ENCODE measurements at regions of chr1 and their contacts with region 1.

Region 1: GRCh38 chr1:114610546-114611245 is 29.3 kb upstream of the BCAS2 start:
- DNase-seq: no peak
- ATAC-seq: peak in 1 of 4 donors; percentile 19
- H3K4me3 ChIP-seq: no peak overlapping the region
- H3K27ac ChIP-seq: peak overlapping the region; percentile 42
- H3K4me1 ChIP-seq: no peaks in the 10 kb centered on the region
- H3K27me3 ChIP-seq: no peaks in the 10 kb centered on the region
- CTCF ChIP-seq: no peak

Region 2: GRCh38 chr1:114282751-114283403 is 327.8 kb before region 1 on chr1:
- intact Hi-C with region 1: no loop called
- DNase-seq: peak; percentile 88 to 94
- ATAC-seq: peak; percentile 95 to 100 (median 98)
- H3K4me3 ChIP-seq: no peak overlapping the region
- H3K27ac ChIP-seq: no peak overlapping the region
- H3K4me1 ChIP-seq: no peaks in the 10 kb centered on the region
- H3K27me3 ChIP-seq: no peaks in the 10 kb centered on the region
- CTCF ChIP-seq: peak; percentile 86

Region 3: GRCh38 chr1:114660224-114660623 is 49.5 kb after region 1 on chr1:
- intact Hi-C with region 1: loop called in 1 of 2 experiments (anchors 5 kb)
- DNase-seq: no peak
- ATAC-seq: no peak
- H3K4me3 ChIP-seq: no peak overlapping the region
- H3K27ac ChIP-seq: peak overlapping the region; percentile 30
- H3K4me1 ChIP-seq: no peaks in the 10 kb centered on the region
- H3K27me3 ChIP-seq: no peaks in the 10 kb centered on the region
- CTCF ChIP-seq: no peak

Region 4: DNA sequence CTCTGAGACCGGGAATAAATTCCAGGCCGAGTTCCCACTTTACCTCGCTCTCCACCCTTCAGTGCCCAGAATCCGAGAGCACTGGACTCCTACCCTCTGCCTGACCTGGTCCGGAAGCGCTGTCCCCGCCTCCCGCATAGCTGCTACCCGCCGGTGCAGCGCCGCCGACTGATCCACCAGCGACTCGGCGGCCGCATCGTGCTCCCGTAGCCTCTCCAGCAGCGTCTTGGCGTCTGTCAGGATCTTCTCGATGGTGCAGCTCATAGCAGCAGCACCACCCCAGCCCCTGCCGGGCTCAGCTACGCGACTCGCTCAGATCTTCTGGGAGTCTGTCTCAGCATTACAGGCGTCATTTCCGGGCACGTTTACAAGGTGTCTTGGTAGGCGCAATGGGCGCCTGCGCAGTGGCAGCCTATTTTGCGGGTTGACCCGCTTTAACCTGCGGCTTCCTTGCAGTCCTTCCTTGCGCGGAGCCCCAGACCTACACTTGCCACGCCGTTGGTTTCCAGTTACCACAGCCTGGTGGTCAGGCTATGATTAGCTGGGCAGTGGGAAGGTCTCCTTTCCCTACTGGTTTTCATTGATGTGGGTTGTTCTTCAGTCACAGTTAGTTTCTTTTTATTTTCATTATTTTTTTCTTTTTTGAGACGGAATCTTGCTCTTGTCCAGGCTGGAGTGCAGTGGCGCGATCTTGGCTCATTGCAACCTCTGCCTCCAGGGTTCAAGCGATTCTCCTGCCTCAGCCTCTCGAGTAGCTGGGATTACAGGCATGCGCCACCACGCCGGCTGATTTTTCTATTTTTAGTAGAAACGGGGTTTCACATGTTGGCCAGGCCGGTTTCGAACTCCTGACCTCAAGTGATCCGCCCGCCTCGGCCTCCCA is 169.9 kb after region 1 on chr1 and contains the start of gene SIKE1:
- intact Hi-C with region 1: no loop called
- DNase-seq: peak; percentile 93 to 96
- ATAC-seq: peak; percentile 94 to 98 (median 96)
- H3K4me3 ChIP-seq: peak within 1 kb of the TSS; percentile 71
- H3K27ac ChIP-seq: peak within 1 kb of the TSS; percentile 94
- H3K4me1 ChIP-seq: peaks cover 17% of the 10 kb centered on the region
- H3K27me3 ChIP-seq: no peaks in the 10 kb centered on the region
- CTCF ChIP-seq: peak; percentile 11
- total RNA-seq, gene SIKE1: 29.8 to 40.0 (median 34.7) TPM